PC-3 (cell line): ENCODE measurements at regions of chr2 and their contacts with region 1.

Region 1: GRCh38 chr2:175233135-175233719 is 51.7 kb upstream of the ATP5MC3 start:
- DNase-seq: peak; percentile 90
- ATAC-seq: peak; percentile 82
- H3K4me3 ChIP-seq: no peak overlapping the region
- H3K27ac ChIP-seq: peak overlapping the region; percentile 20; the same call in 1 of the 2 replicates
- H3K4me1 ChIP-seq: peaks cover 27% of the 10 kb centered on the region
- H3K27me3 ChIP-seq: peaks cover 2% of the 10 kb centered on the region; the same call in 1 of the 2 replicates
- CTCF ChIP-seq: no peak

Region 2: DNA sequence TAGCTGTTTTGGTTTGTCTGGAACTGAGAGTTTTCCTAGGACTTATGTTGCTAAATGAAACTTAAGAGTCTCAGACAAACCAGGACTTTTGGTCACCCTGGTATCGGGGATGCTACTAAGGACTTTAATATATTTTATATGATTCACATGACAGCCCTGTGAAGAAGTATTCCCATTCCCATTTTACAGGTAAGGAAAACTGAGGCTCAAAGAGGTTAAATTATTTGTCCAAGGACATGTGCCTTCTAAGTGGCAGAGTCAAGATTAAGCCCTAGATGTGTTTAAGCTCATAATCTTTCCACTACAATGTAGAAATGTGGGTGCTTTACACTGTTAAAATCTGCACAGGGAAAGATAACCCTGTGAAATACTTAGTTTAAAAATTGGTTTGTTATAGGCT is 25.9 kb after region 1 on chr2:
- CTCF ChIA-PET with region 1: interaction called, 13 read pairs
- POLR2A ChIA-PET with region 1: no interaction called
- intact Hi-C with region 1: no loop called
- DNase-seq: no peak
- ATAC-seq: no peak
- H3K4me3 ChIP-seq: no peak overlapping the region
- H3K27ac ChIP-seq: no peak overlapping the region
- H3K4me1 ChIP-seq: no peaks in the 10 kb centered on the region
- H3K27me3 ChIP-seq: peaks cover 41% of the 10 kb centered on the region
- CTCF ChIP-seq: no peak

Region 3: DNA sequence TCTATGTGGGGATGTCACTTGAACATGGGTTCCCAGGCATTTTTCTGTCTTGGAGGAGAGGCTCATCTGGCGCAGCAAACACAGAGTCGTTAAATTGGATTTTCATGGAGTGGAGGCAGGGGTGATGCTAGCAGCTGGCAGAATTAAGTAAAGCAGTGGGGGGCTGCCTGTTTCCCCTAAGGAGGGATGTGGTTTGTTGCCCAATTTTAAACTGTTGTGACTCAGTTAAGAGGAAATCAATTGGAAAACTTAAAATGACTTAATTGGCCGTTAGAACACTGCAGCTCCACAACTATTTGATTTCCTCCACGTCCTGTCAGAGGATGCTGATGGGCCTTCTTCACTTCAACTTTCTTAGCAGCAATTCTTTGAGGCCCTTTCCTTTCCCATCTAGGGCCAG is 302.4 kb after region 1 on chr2:
- CTCF ChIA-PET with region 1: no interaction called
- POLR2A ChIA-PET with region 1: no interaction called
- intact Hi-C with region 1: no loop called
- DNase-seq: no peak
- ATAC-seq: no peak
- H3K4me3 ChIP-seq: no peak overlapping the region
- H3K27ac ChIP-seq: no peak overlapping the region
- H3K4me1 ChIP-seq: no peaks in the 10 kb centered on the region
- H3K27me3 ChIP-seq: peaks cover 65% of the 10 kb centered on the region
- CTCF ChIP-seq: no peak